Heart right ventricle (tissue), 16 donors: ENCODE measurements at regions of chr3 and their contacts with region 1.

Region 1: DNA sequence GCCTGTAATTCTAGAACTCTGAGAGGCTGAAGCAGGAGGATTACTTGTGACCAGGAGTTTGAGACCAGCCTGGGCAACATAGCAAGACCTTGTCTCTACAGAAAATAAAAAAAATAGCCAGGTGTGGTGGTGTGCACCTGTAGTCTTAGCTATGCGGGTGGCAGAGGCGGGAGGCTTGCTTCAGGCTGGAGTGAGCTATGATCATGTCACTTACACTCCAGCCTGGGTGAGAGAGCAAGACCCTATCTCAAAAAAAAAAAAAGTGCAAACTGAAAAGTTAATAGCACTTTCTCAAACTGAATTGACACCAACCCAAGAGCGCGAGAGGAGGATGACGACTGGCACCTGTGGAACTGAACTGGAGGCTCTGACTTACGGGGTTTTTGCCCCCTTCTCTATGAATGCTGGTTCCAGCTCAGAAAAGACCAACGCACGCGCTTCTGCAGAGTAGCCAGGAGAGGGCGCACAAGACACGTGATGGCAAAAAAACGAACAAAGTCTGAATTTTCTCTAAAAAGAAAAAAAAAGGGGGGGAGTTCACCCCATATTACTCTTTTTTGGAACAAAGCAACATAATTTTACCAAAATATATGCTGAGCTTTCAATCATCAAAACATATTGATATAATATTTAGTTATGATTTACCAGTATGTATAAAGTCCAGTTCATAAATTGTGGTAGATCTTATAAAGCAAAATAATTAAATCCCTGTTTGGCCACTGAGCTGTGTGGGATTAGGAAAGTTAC is 23.7 kb downstream of the CFAP92 start:
- DNase-seq: peak; percentile 29 to 32
- ATAC-seq: peak in 6 of 8 donors; percentile 32 to 66 (median 45)
- H3K4me3 ChIP-seq: no peak overlapping the region
- H3K27ac ChIP-seq: peak overlapping the region in 3 of 10 donors; percentile 68 to 77 (median 70)
- H3K4me1 ChIP-seq: peaks cover 3 to 28% (median 19%) of the 10 kb centered on the region in 9 donors
- H3K27me3 ChIP-seq: no peaks in the 10 kb centered on the region
- CTCF ChIP-seq: peak; percentile 86 to 97 (median 93)

Region 2: GRCh38 chr3:128632301-128632700 is 337.9 kb before region 1 on chr3:
- intact Hi-C with region 1: no loop called
- DNase-seq: no peak
- ATAC-seq: no peak
- H3K4me3 ChIP-seq: no peak overlapping the region
- H3K27ac ChIP-seq: peak overlapping the region in 3 of 10 donors; percentile 5 to 53 (median 40)
- H3K4me1 ChIP-seq: peaks cover 0 to 17% (median 10%) of the 10 kb centered on the region in 9 donors
- H3K27me3 ChIP-seq: no peaks in the 10 kb centered on the region
- CTCF ChIP-seq: no peak

Region 3: GRCh38 chr3:128879125-128879969 is 90.8 kb before region 1 on chr3 and contains the start of gene ACAD9:
- intact Hi-C with region 1: no loop called
- DNase-seq: peak; percentile 96 to 98
- ATAC-seq: peak; percentile 97 to 99 (median 98)
- H3K4me3 ChIP-seq: peak within 1 kb of the TSS; percentile 54 to 92 (median 72)
- H3K27ac ChIP-seq: peak within 1 kb of the TSS; percentile 72 to 96 (median 94)
- H3K4me1 ChIP-seq: peaks cover 0 to 45% (median 29%) of the 10 kb centered on the region in 9 donors
- H3K27me3 ChIP-seq: no peaks in the 10 kb centered on the region
- CTCF ChIP-seq: no peak
- total RNA-seq, gene ACAD9: 34.8 to 45.9 (median 37.8) TPM

Region 4: GRCh38 chr3:129026728-129027543 is 56.8 kb after region 1 on chr3:
- intact Hi-C with region 1: loop called in 1 of 10 experiments (anchors 2 kb)
- DNase-seq: peak; percentile 90 to 91
- ATAC-seq: peak; percentile 86 to 95 (median 90)
- H3K4me3 ChIP-seq: peak overlapping the region; percentile 27 to 65 (median 55)
- H3K27ac ChIP-seq: peak overlapping the region in 9 of 10 donors; percentile 55 to 93 (median 75)
- H3K4me1 ChIP-seq: peaks cover 9 to 57% (median 31%) of the 10 kb centered on the region in 9 donors
- H3K27me3 ChIP-seq: no peaks in the 10 kb centered on the region
- CTCF ChIP-seq: peak; percentile 54 to 90 (median 79)

Region 5: DNA sequence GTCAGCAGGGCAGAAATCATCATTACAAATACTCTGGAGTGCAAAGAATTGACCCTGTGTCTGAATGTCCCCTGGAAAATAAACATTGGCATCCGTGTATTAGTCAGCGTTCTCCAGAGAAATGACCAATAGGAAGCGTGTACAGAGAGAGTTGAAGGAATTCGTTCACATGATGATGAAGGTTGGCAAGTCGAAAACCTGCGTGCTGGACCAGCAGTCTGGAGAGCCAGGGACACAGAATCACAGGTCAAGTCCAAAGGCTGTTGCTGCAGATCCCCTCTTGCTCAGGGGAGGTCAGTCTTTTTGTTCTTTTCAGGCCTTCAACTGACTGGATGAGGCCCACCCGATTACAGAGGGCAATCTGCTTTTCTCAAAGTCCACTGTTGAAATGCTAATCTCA is 107.1 kb after region 1 on chr3:
- intact Hi-C with region 1: loop called in 3 of 10 experiments (anchors 10 kb)
- DNase-seq: no peak
- ATAC-seq: no peak
- H3K4me3 ChIP-seq: no peak overlapping the region
- H3K27ac ChIP-seq: no peak overlapping the region
- H3K4me1 ChIP-seq: peaks cover 0 to 5% (median 0%) of the 10 kb centered on the region in 9 donors
- H3K27me3 ChIP-seq: no peaks in the 10 kb centered on the region
- CTCF ChIP-seq: no peak

Region 6: DNA sequence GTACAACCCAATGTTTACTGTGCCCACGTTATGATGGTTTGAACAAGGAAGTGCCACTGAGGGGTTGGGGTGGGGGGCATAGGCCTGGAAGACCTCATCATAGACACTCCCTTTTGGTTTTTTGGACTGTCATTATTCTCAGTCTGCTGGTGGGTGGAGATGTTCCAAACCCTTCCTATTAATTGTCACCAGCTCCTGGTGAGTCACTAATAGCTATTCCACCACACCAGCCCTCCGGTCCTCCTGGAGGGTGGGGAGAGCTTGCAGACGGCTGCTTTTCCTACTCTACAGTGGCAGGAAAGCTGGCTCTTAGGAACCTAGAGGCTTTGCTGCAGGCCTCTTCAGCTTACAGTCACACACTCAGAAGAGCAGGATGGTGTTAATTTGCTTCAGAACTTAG is 270.3 kb after region 1 on chr3:
- intact Hi-C with region 1: loop called in 9 of 10 experiments (anchors 2 to 10 kb)
- DNase-seq: no peak
- ATAC-seq: peak in 7 of 8 donors; percentile 35 to 78 (median 64)
- H3K4me3 ChIP-seq: no peak overlapping the region
- H3K27ac ChIP-seq: peak overlapping the region in 9 of 10 donors; percentile 12 to 92 (median 38)
- H3K4me1 ChIP-seq: peaks cover 2 to 37% (median 11%) of the 10 kb centered on the region in 9 donors
- H3K27me3 ChIP-seq: no peaks in the 10 kb centered on the region
- CTCF ChIP-seq: no peak

Region 7: GRCh38 chr3:129316131-129317013 is 346.2 kb after region 1 on chr3:
- intact Hi-C with region 1: loop called in 1 of 10 experiments (anchors 10 kb)
- DNase-seq: peak; percentile 87 to 89
- ATAC-seq: peak; percentile 54 to 70 (median 62)
- H3K4me3 ChIP-seq: peak overlapping the region; percentile 50 to 99 (median 94)
- H3K27ac ChIP-seq: peak overlapping the region; percentile 86 to 98 (median 93)
- H3K4me1 ChIP-seq: peaks cover 6 to 31% (median 20%) of the 10 kb centered on the region in 9 donors
- H3K27me3 ChIP-seq: no peaks in the 10 kb centered on the region
- CTCF ChIP-seq: peak in 8 of 9 donors; percentile 7 to 79 (median 58)